ENCODE measurements at regions of chr3 and their contacts with region 1.

Region 1: DNA sequence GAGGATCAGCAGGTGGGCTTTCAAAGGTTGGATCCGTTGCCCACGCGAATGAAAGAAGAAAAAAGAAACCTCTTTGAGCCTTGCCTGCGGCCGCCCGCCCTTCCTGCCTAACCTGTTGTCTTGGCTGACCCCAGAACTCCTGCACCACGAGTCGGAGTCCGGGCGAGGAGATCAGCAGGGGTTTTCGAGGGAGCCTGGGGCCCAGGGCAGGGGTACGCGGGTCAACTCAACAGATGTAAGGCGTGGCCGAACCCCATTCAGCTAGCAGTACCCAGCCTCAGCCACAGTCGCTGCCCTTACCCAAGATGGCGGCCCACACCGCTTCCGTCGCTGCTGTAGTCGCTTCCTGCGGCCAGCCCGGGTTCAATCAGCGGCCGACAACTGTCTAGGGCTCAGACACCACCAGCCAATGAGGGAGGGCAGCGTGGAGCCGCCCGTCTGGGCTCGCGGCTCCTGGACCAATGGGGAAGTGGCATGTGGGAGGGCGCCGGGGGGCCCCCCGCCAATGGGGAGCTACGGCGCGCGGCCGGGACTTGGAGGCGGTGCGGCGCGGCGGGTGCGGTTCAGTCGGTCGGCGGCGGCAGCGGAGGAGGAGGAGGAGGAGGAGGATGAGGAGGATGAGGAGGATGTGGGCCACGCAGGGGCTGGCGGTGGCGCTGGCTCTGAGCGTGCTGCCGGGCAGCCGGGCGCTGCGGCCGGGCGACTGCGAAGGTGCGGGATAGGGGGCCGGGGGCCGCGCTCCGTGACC is at the start of gene MANF:
- DNase-seq: peak; percentile 99
- H3K4me3 ChIP-seq: peak within 1 kb of the TSS; percentile 59 to 91 (median 83)
- H3K27ac ChIP-seq: peak within 1 kb of the TSS; percentile 84 to 96 (median 92)
- H3K4me1 ChIP-seq: peaks cover 0 to 42% (median 35%) of the 10 kb centered on the region in 4 donors
- H3K27me3 ChIP-seq: no peaks in the 10 kb centered on the region
- CTCF ChIP-seq: no peak
- EP300 ChIP-seq: no peak
- POLR2A ChIP-seq: peak; percentile 24 to 51
- total RNA-seq, gene MANF: 12.2 to 26.2 (median 20.5) TPM

Region 2: GRCh38 chr3:50321336-50322114 is 1063.4 kb before region 1 on chr3:
- intact Hi-C with region 1: loop called (anchors 10 kb)
- DNase-seq: peak; percentile 95
- H3K4me3 ChIP-seq: peak overlapping the region; percentile 58 to 84 (median 75)
- H3K27ac ChIP-seq: peak overlapping the region; percentile 88 to 92 (median 92)
- H3K4me1 ChIP-seq: peaks cover 0 to 70% (median 59%) of the 10 kb centered on the region in 4 donors
- H3K27me3 ChIP-seq: no peaks in the 10 kb centered on the region
- CTCF ChIP-seq: peak; percentile 22 to 50 (median 42)
- EP300 ChIP-seq: no peak
- POLR2A ChIP-seq: no peak

Region 3: GRCh38 chr3:50568947-50569749 is 815.8 kb before region 1 on chr3 and contains the start of gene HEMK1:
- intact Hi-C with region 1: loop called (anchors 5 kb)
- DNase-seq: peak; percentile 99
- H3K4me3 ChIP-seq: peak within 1 kb of the TSS; percentile 62 to 86 (median 75)
- H3K27ac ChIP-seq: peak within 1 kb of the TSS; percentile 87 to 94 (median 89)
- H3K4me1 ChIP-seq: peaks cover 0 to 45% (median 35%) of the 10 kb centered on the region in 4 donors
- H3K27me3 ChIP-seq: no peaks in the 10 kb centered on the region
- CTCF ChIP-seq: no peak
- EP300 ChIP-seq: peak in 2 of 4 donors; percentile 66 to 89
- POLR2A ChIP-seq: peak; percentile 72 to 81
- total RNA-seq, gene HEMK1: 5.0 to 13.3 (median 7.2) TPM

Region 4: DNA sequence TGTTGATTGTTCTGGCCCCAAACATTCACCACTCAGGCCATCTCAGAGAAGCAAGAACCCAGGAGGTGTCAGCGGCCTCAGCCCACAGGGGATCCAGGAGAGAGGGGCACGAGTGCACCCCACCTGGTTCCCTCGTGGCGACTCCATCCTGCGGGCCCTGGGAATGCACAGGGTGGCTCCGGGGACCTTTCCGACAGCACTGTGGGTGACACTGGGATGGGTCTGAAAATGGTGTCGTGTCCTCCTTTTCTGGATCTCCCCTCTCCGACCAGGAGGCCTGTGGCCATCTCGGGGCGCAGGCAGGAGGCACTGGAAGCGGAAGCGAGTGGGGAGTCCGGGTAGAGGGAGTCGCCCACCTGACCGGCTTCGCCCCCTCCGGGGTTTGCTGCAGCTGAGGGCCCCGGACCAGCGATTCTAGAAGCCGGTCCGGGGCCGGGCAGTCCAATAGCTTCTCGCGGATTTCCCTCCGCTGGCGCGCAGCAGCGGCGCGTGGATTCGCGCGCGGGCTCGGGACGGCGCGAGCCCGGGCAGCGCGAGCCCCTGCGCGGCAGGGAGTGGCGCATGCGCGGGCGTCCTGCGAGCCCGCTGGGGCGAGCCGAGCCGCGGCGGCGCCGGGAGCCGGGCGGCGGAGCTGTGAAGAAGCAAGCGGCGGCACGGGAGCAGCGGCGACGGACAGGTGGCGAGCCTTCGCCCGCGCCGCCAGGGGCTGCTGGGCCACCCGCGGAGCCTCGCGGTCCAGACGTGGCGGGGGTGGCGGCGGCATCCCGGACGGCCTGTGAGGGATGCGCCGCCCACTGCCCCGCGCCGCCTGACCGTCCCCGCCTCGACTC is 710.3 kb before region 1 on chr3 and contains the start of gene DOCK3:
- intact Hi-C with region 1: loop called (anchors 10 kb)
- DNase-seq: peak; percentile 82
- H3K4me3 ChIP-seq: peak within 1 kb of the TSS; percentile 33 to 66 (median 64)
- H3K27ac ChIP-seq: peak within 1 kb of the TSS; percentile 46 to 63 (median 48)
- H3K4me1 ChIP-seq: peaks cover 0 to 18% (median 13%) of the 10 kb centered on the region in 4 donors
- H3K27me3 ChIP-seq: peaks cover 0 to 34% (median 16%) of the 10 kb centered on the region in 3 donors
- CTCF ChIP-seq: no peak
- EP300 ChIP-seq: no peak
- POLR2A ChIP-seq: no peak
- total RNA-seq, gene DOCK3: 1.8 to 4.4 (median 3.6) TPM

Measured in sigmoid colon (tissue), 7 donors.